ENCODE measurements at regions of chr2 and their contacts with region 1.

Region 1: DNA sequence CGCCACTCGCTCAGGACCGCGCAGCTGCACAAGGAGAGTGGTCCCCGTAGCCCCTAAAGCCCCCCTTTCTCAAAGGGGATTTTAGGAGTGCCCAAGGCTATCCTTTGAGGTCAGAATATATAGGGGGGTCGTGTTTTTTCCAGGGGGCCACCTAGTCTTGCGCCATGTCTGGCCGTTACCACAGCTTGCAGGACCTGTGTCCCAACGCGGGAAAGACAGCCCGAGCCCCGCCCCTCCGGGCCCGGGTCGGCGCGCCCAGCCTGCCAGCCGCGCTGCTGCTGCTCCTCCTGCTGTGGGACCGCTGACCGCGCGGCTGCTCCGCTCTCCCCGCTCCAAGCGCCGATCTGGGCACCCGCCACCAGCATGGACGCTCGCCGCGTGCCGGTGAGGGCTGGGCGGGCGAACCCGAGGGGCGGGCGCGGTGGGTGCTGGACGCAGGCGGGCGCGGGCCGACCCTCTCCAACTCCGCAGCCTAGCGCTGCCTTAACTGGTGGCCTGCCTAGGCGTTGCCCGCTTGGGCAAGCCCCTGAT is at the start of gene CDCA7:
- DNase-seq: peak; percentile 57 to 82
- ATAC-seq: peak; percentile 87 to 95 (median 92)
- H3K4me3 ChIP-seq: peak within 1 kb of the TSS; percentile 96
- H3K27ac ChIP-seq: peak within 1 kb of the TSS; percentile 87
- H3K4me1 ChIP-seq: peaks cover 12% of the 10 kb centered on the region
- H3K27me3 ChIP-seq: peaks cover 0 to 13% (median 0%) of the 10 kb centered on the region in 3 donors
- CTCF ChIP-seq: no peak
- total RNA-seq, gene CDCA7: 1.9 to 9.2 (median 2.3) TPM

Region 2: GRCh38 chr2:172972005-172972619 is 382.6 kb before region 1 on chr2:
- intact Hi-C with region 1: loop called (anchors 5 to 10 kb)
- DNase-seq: peak in 1 of 2 donors; percentile 63
- ATAC-seq: peak; percentile 61 to 86 (median 72)
- H3K4me3 ChIP-seq: no peak overlapping the region
- H3K27ac ChIP-seq: no peak overlapping the region
- H3K4me1 ChIP-seq: peaks cover 9% of the 10 kb centered on the region
- H3K27me3 ChIP-seq: no peaks in the 10 kb centered on the region
- CTCF ChIP-seq: peak; percentile 76

Region 3: GRCh38 chr2:173027181-173028128 is 327.2 kb before region 1 on chr2:
- intact Hi-C with region 1: loop called (anchors 5 to 10 kb)
- DNase-seq: peak; percentile 65 to 81
- ATAC-seq: peak; percentile 66 to 76 (median 71)
- H3K4me3 ChIP-seq: peak overlapping the region; percentile 27
- H3K27ac ChIP-seq: peak overlapping the region; percentile 92
- H3K4me1 ChIP-seq: peaks cover 50% of the 10 kb centered on the region
- H3K27me3 ChIP-seq: no peaks in the 10 kb centered on the region
- CTCF ChIP-seq: peak; percentile 97

Region 4: GRCh38 chr2:173090276-173090877 is 264.3 kb before region 1 on chr2:
- intact Hi-C with region 1: no loop called
- DNase-seq: peak; percentile 27 to 51
- ATAC-seq: peak; percentile 67 to 81 (median 80)
- H3K4me3 ChIP-seq: peak overlapping the region; percentile 62
- H3K27ac ChIP-seq: peak overlapping the region; percentile 88
- H3K4me1 ChIP-seq: peaks cover 57% of the 10 kb centered on the region
- H3K27me3 ChIP-seq: no peaks in the 10 kb centered on the region
- CTCF ChIP-seq: no peak

Region 5: DNA sequence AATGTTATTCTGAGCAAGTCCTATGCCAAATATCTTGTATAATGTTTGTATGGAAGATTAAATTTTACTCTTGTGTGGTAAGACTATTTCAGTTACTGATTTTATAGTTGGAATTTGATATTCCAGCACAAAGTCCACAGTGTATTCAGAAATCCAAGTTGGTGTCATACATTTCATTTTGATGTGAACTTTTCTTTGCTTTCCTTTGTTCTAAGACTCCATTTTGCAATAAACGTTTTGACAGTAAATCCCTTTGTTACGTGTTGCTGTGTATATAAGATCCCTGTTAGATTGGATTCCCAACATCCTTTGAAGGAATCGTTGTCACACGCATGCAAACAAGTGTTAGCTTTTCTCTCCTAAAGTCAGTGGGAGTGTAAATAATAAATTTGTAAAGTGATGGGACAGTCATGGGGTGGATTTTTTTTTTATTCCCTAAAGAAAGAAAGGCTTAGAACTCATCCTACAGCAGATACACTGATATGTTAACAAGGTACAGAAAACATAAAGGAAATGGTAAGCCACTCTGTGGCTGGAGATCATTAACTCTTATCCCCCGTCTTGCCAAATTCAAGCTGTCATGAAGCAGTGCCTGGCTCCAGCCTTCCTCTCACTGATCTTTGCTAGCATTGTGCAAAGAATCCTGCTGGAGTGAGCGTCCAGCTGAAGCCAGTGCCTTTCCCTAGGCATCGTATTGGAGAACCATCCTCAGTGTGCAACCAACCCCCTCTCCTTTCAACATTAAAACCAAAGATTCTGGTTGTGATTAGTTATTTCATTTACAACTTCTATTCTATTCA is 127.6 kb before region 1 on chr2:
- intact Hi-C with region 1: loop called in 1 of 2 experiments (anchors 5 kb)
- DNase-seq: no peak
- ATAC-seq: peak in 1 of 4 donors; percentile 35
- H3K4me3 ChIP-seq: no peak overlapping the region
- H3K27ac ChIP-seq: no peak overlapping the region
- H3K4me1 ChIP-seq: peaks cover 39% of the 10 kb centered on the region
- H3K27me3 ChIP-seq: no peaks in the 10 kb centered on the region
- CTCF ChIP-seq: no peak